Thyroid gland (tissue), 4 donors: ENCODE measurements at regions of chr1 and their contacts with region 1.

Region 1: GRCh38 chr1:226121587-226122400 is 59.3 kb downstream of the H3-3A start:
- DNase-seq: peak; percentile 60 to 62
- H3K4me3 ChIP-seq: peak overlapping the region; percentile 49 to 71 (median 53)
- H3K27ac ChIP-seq: peak overlapping the region in 2 of 3 donors; percentile 35 to 77
- H3K4me1 ChIP-seq: peaks cover 8 to 19% of the 10 kb centered on the region in 2 donors
- H3K27me3 ChIP-seq: no peaks in the 10 kb centered on the region
- CTCF ChIP-seq: peak in 5 of 6 experiments; percentile 49 to 98 (median 89)
- POLR2A ChIP-seq: peak in 1 of 2 donors; percentile 10

Region 2: GRCh38 chr1:225987491-225988316 is 134.1 kb before region 1 on chr1:
- intact Hi-C with region 1: no loop called
- DNase-seq: no peak
- H3K4me3 ChIP-seq: no peak overlapping the region
- H3K27ac ChIP-seq: peak overlapping the region in 2 of 3 donors; percentile 62 to 66
- H3K4me1 ChIP-seq: peaks cover 13 to 18% of the 10 kb centered on the region in 2 donors
- H3K27me3 ChIP-seq: no peaks in the 10 kb centered on the region
- CTCF ChIP-seq: peak; percentile 29 to 74 (median 51)
- POLR2A ChIP-seq: no peak

Region 3: GRCh38 chr1:226062558-226063223 is 59.1 kb before region 1 on chr1 and contains the start of gene H3-3A:
- intact Hi-C with region 1: loop called (anchors 5 kb)
- DNase-seq: peak; percentile 98 to 99
- H3K4me3 ChIP-seq: peak within 1 kb of the TSS; percentile 42 to 92 (median 70)
- H3K27ac ChIP-seq: peak within 1 kb of the TSS; percentile 99
- H3K4me1 ChIP-seq: peaks cover 21 to 27% of the 10 kb centered on the region in 2 donors
- H3K27me3 ChIP-seq: no peaks in the 10 kb centered on the region
- CTCF ChIP-seq: peak in 1 of 6 experiments; percentile 16
- POLR2A ChIP-seq: peak; percentile 97 to 99
- total RNA-seq, gene H3-3A: 304 to 610 (median 445) TPM

Region 4: GRCh38 chr1:226149806-226150205 is 28.0 kb after region 1 on chr1:
- intact Hi-C with region 1: no loop called
- DNase-seq: no peak
- H3K4me3 ChIP-seq: no peak overlapping the region
- H3K27ac ChIP-seq: no peak overlapping the region
- H3K4me1 ChIP-seq: no peaks in the 10 kb centered on the region
- H3K27me3 ChIP-seq: no peaks in the 10 kb centered on the region
- CTCF ChIP-seq: no peak
- POLR2A ChIP-seq: no peak

Region 5: DNA sequence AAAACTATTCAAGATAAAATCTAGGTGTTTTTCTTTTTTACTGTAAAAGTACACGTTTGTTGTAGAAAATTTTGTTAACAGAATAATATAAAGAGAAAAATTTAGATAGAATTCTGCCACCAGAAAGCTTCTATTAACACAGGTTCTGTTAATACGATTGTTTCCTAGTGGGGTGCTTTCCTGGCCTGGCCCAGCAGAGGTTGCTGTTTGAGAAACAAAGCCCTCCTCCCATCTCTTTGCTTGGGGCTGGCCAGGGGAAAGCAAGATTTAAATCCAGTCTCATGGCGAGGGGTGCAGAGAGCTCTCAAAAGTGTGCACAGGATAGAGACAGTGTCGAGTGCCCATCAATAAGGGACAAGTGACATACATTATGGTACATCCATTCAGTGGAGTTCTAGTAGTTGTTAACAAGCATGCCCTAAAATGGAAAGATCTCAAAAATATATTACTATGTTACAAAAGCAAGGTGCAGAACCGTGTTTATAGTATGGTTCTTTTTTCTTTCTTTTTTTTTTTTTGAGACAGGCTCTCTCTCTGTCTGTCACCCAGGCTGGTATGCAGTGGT is 79.3 kb after region 1 on chr1:
- intact Hi-C with region 1: loop called (anchors 2 kb)
- DNase-seq: no peak
- H3K4me3 ChIP-seq: no peak overlapping the region
- H3K27ac ChIP-seq: no peak overlapping the region
- H3K4me1 ChIP-seq: no peaks in the 10 kb centered on the region
- H3K27me3 ChIP-seq: no peaks in the 10 kb centered on the region
- CTCF ChIP-seq: peak in 1 of 6 experiments; percentile 11
- POLR2A ChIP-seq: no peak